ENCODE measurements at regions of chr5 and their contacts with region 1.

Region 1: GRCh38 chr5:168219515-168220410 is 71.7 kb upstream of the WWC1 start:
- DNase-seq: no peak
- ATAC-seq: peak; percentile 67 to 70
- H3K4me3 ChIP-seq: peak overlapping the region; percentile 21
- H3K27ac ChIP-seq: no peak overlapping the region
- H3K4me1 ChIP-seq: no peaks in the 10 kb centered on the region
- H3K27me3 ChIP-seq: no peaks in the 10 kb centered on the region

Region 2: GRCh38 chr5:167587772-167588437 is 631.9 kb before region 1 on chr5:
- intact Hi-C with region 1: loop called in 1 of 4 experiments (anchors 10 kb)
- DNase-seq: no peak
- ATAC-seq: no peak
- H3K4me3 ChIP-seq: no peak overlapping the region
- H3K27ac ChIP-seq: no peak overlapping the region
- H3K4me1 ChIP-seq: peaks cover 1% of the 10 kb centered on the region
- H3K27me3 ChIP-seq: no peaks in the 10 kb centered on the region

Region 3: GRCh38 chr5:167709625-167710024 is 510.1 kb before region 1 on chr5:
- intact Hi-C with region 1: loop called in 1 of 4 experiments (anchors 10 kb)
- DNase-seq: no peak
- ATAC-seq: no peak
- H3K4me3 ChIP-seq: no peak overlapping the region
- H3K27ac ChIP-seq: no peak overlapping the region
- H3K4me1 ChIP-seq: no peaks in the 10 kb centered on the region
- H3K27me3 ChIP-seq: no peaks in the 10 kb centered on the region

Region 4: GRCh38 chr5:167723254-167723871 is 496.4 kb before region 1 on chr5:
- intact Hi-C with region 1: loop called in 3 of 4 experiments (anchors 5 to 10 kb)
- DNase-seq: peak; percentile 61 to 87 (median 75)
- ATAC-seq: peak; percentile 74 to 90
- H3K4me3 ChIP-seq: no peak overlapping the region
- H3K27ac ChIP-seq: no peak overlapping the region
- H3K4me1 ChIP-seq: no peaks in the 10 kb centered on the region
- H3K27me3 ChIP-seq: no peaks in the 10 kb centered on the region

Region 5: DNA sequence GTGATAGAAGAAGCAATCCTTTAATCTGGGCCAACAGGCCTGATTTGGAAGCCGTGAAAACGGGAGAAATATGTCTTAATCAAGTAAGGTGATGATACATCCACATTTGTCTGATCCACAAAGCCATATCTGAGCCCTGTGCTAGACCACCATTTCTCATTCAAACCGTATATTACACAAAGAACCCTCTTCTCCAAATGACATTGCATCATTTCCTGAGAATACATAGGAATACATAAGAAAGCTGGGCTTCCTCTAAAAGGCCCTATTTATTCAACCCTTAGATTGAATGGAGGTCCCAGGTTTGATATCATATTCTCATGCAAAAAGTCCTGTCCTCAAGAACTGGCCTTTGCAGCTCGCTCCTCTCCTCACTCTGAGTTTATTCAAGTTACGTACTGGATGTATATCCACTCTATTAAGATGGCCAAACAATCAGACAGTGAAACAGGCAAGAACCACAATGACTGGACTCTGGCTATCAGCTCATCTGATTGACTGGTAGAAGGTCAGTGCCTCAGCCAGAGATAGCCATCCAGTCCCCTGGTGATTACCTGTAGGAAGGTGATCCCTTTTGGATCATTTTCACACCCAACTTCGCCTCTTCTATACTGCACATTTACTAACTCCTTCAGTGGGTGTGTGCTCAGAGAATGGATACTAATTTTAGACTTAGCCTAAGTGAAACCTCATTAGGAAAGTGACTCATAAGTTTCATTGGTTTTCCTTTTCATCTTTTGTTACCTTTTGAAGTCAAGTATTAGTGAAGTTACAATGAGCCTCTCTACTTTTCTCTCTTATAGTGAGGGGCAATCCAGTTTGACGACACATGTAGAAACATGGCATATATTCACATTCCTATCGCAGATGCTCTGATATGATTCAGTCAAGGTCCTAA is 95.9 kb before region 1 on chr5:
- intact Hi-C with region 1: loop called in 2 of 4 experiments (anchors 5 to 10 kb)
- DNase-seq: no peak
- ATAC-seq: no peak
- H3K4me3 ChIP-seq: no peak overlapping the region
- H3K27ac ChIP-seq: no peak overlapping the region
- H3K4me1 ChIP-seq: no peaks in the 10 kb centered on the region
- H3K27me3 ChIP-seq: no peaks in the 10 kb centered on the region

Measured in right cardiac atrium (tissue), 5 donors.